ENCODE measurements at regions of chr14 and their contacts with region 1.

Region 1: GRCh38 chr14:31420319-31421111 is at the start of gene HEATR5A:
- DNase-seq: peak; percentile 96
- ATAC-seq: peak; percentile 97
- H3K4me3 Mint-ChIP-seq: peak within 1 kb of the TSS; percentile 99
- H3K27ac Mint-ChIP-seq: peak within 1 kb of the TSS; percentile 89
- H3K4me1 Mint-ChIP-seq: peaks cover 13% of the 10 kb centered on the region
- H3K27me3 Mint-ChIP-seq: peaks cover 10% of the 10 kb centered on the region
- total RNA-seq, gene HEATR5A: 9.4 to 11.5 TPM

Region 2: GRCh38 chr14:31410048-31410650 is 10.4 kb before region 1 on chr14:
- POLR2A ChIA-PET with region 1: no interaction called
- DNase-seq: no peak
- ATAC-seq: no peak
- H3K4me3 Mint-ChIP-seq: no peak overlapping the region
- H3K27ac Mint-ChIP-seq: no peak overlapping the region
- H3K4me1 Mint-ChIP-seq: peaks cover 7% of the 10 kb centered on the region
- H3K27me3 Mint-ChIP-seq: no peaks in the 10 kb centered on the region

Region 3: GRCh38 chr14:31435276-31435675 is 14.8 kb after region 1 on chr14:
- POLR2A ChIA-PET with region 1: no interaction called
- DNase-seq: no peak
- ATAC-seq: no peak
- H3K4me3 Mint-ChIP-seq: no peak overlapping the region
- H3K27ac Mint-ChIP-seq: no peak overlapping the region
- H3K4me1 Mint-ChIP-seq: no peaks in the 10 kb centered on the region
- H3K27me3 Mint-ChIP-seq: no peaks in the 10 kb centered on the region

Region 4: DNA sequence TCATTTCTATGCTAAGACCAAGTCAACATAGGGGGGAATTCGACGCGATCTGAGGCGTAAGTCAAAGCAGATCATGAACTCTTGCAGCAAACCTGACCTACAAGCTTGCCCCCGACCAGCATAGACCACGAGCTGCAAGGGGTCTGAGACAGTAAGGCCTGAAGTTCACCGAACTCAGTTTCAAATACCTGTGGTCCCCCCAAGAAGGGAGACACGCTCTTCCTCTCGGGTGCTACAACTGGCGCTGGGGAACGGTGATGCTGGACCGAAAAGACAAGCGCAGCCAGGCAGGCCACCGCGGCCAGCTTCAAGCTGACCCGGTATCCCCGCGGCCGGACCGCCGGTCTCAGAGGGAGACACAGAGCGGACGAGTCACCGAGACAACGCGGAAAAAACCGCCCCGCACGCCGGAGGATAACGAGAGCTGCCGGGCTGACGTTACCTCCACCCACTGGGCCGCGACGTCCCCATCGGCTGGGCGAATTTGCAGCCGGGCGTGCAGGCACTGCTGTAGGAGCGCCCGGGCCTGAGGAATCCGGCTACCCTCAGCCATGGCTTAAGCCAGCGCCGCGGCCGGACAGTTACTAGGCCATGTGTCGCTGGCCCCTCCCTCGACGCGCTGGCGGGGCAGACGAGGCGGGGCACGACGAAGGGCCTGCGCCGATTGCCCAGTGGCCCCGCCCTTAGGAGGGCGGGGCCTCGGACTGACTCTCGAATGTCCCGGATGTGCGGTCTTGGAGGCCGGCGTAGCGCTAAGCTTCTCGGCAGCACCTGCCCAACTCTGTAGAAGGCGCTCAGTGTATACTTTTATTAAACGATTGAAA is 36.5 kb after region 1 on chr14 and contains the start of gene DTD2:
- POLR2A ChIA-PET with region 1: interaction called, 22 read pairs
- DNase-seq: peak; percentile 90
- ATAC-seq: peak; percentile 97
- H3K4me3 Mint-ChIP-seq: peak within 1 kb of the TSS; percentile 92
- H3K27ac Mint-ChIP-seq: peak within 1 kb of the TSS; percentile 92
- H3K4me1 Mint-ChIP-seq: peaks cover 17% of the 10 kb centered on the region
- H3K27me3 Mint-ChIP-seq: no peaks in the 10 kb centered on the region
- total RNA-seq, gene DTD2: 16.7 to 18.1 TPM

Region 5: DNA sequence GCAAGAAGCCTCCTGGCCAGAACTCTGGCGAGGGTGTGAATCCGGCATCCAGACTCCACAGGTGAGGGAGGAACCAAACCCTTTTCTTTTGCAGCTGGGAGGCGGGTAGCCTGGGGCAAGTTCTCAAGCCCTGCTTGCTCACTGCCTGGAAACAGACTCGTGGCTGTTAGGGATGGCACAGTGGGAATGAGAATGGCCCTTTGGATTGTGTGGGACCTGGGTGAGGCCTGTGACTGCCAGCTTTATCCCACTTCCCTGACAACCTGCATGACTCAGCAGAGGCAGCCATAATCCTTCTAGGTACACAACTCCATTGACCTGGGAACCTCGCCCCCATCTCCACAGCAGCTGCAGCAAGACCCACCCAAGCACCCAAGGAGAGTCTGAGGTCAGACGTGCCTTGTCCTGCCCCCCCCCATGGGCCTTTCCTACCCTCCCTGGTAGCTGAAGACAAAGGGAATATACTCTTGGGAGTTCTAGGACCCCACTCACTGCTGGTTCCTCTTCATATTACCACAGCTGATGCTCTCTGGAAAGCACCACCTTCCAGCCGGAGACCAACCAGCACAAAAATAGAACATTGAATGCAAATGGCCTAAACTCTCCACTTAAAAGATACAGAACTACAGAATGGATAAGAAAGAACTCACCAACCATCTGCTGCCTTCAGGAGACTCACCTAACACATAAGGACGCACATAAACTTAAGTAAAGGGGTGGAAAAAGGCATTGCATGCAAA is 72.4 kb after region 1 on chr14:
- POLR2A ChIA-PET with region 1: no interaction called
- DNase-seq: no peak
- ATAC-seq: no peak
- H3K4me3 Mint-ChIP-seq: no peak overlapping the region
- H3K27ac Mint-ChIP-seq: no peak overlapping the region
- H3K4me1 Mint-ChIP-seq: no peaks in the 10 kb centered on the region
- H3K27me3 Mint-ChIP-seq: peaks cover 9% of the 10 kb centered on the region

Measured in activated naive CD8-positive, alpha-beta T cell treated with anti-CD3 and anti-CD28 coated beads, Interleukin-2, amount 10 ng/mL, durations not matched to agents 7 days and 5 days (primary cell).